ENCODE measurements at regions of chr11 and their contacts with region 1.

Region 1: GRCh38 chr11:111299101-111300026 is 1.0 kb downstream of the POU2AF3 start:
- DNase-seq: peak; percentile 74 to 88 (median 79)
- H3K4me3 ChIP-seq: peak overlapping the region; percentile 58
- H3K27ac ChIP-seq: peak overlapping the region; percentile 80 to 90
- H3K4me1 ChIP-seq: peaks cover 6% of the 10 kb centered on the region
- H3K27me3 ChIP-seq: no peaks in the 10 kb centered on the region
- CTCF ChIP-seq: peak; percentile 59 to 78 (median 68)
- EP300 ChIP-seq: no peak
- POLR2A ChIP-seq: peak; percentile 10

Region 2: GRCh38 chr11:111213256-111213655 is 86.1 kb before region 1 on chr11:
- intact Hi-C with region 1: no loop called
- DNase-seq: no peak
- H3K4me3 ChIP-seq: no peak overlapping the region
- H3K27ac ChIP-seq: no peak overlapping the region
- H3K4me1 ChIP-seq: no peaks in the 10 kb centered on the region
- H3K27me3 ChIP-seq: no peaks in the 10 kb centered on the region
- CTCF ChIP-seq: no peak
- EP300 ChIP-seq: no peak
- POLR2A ChIP-seq: no peak

Region 3: GRCh38 chr11:111422494-111423249 is 123.3 kb after region 1 on chr11:
- intact Hi-C with region 1: loop called in 3 of 4 experiments (anchors 5 kb)
- DNase-seq: peak; percentile 59 to 76 (median 67)
- H3K4me3 ChIP-seq: no peak overlapping the region
- H3K27ac ChIP-seq: no peak overlapping the region
- H3K4me1 ChIP-seq: peaks cover 18% of the 10 kb centered on the region
- H3K27me3 ChIP-seq: no peaks in the 10 kb centered on the region
- CTCF ChIP-seq: peak; percentile 46 to 64 (median 61)
- EP300 ChIP-seq: no peak
- POLR2A ChIP-seq: no peak

Region 4: GRCh38 chr11:111429066-111429506 is 129.7 kb after region 1 on chr11:
- intact Hi-C with region 1: loop called in 3 of 4 experiments (anchors 5 kb)
- DNase-seq: peak; percentile 44 to 84 (median 65)
- H3K4me3 ChIP-seq: no peak overlapping the region
- H3K27ac ChIP-seq: no peak overlapping the region
- H3K4me1 ChIP-seq: no peaks in the 10 kb centered on the region
- H3K27me3 ChIP-seq: no peaks in the 10 kb centered on the region
- CTCF ChIP-seq: peak in 2 of 3 donors; percentile 56 to 64
- EP300 ChIP-seq: no peak
- POLR2A ChIP-seq: no peak